ENCODE measurements at regions of chr4 and their contacts with region 1.

Region 1: GRCh38 chr4:88823058-88823919 is 125.7 kb upstream of the NAP1L5 start:
- DNase-seq: peak; percentile 57
- ATAC-seq: peak; percentile 97
- H3K4me3 ChIP-seq: peak overlapping the region; percentile 64
- H3K27ac ChIP-seq: no peak overlapping the region
- H3K4me1 ChIP-seq: peaks cover 5% of the 10 kb centered on the region; the same call in 1 of the 2 replicates
- H3K27me3 ChIP-seq: no peaks in the 10 kb centered on the region
- CTCF ChIP-seq: no peak
- EP300 ChIP-seq: no peak
- POLR2A ChIP-seq: no peak
- RAD21 ChIP-seq: no peak

Region 2: DNA sequence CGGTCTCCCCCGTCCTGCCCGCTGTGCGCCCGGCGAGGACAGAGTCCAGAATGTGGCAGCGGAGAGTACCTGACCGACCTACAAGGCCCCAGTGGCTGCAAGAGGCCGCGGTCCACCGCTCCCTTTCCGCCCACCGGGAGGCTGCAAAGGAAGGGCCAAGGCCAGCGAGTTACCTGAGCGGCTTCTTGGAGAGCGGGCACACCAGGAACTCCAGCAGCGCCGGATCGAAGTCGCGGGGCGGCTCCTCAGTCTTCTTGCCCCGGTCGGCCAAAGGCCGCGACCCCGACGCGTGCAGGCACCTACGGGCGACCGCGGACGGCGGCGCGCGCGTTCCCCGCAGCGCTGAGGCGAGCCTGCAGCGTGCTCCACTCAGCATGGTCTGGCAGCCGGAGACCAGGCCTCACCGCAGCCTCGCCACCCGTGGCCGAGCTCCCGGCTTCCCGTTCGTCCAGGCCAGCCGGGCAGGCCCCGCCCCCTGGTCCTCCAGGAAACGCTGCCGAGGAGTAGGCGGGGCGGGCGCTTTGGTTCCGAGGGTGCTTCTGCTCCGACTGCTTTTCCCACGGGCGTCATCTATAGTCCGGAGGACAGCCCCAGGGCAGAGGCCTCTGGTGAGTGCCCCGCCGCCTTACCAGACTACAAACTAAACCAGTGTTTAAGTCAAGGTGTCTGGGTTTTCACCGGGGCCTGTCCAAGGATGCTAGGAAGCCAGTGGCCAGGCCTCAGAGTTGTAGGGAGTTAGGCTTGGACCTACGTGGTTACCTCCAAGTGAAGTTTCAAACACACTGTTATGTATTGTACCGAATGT is 299.8 kb before region 1 on chr4 and contains the start of gene PYURF:
- CTCF ChIA-PET with region 1: interaction called, 17 read pairs
- POLR2A ChIA-PET with region 1: no interaction called
- RAD21 ChIA-PET with region 1: no interaction called
- SMC1A ChIA-PET with region 1: interaction called, 3 read pairs
- in situ Hi-C with region 1: no loop called
- intact Hi-C with region 1: no loop called
- DNase-seq: peak; percentile 44
- ATAC-seq: peak; percentile 88
- H3K4me3 ChIP-seq: peak within 1 kb of the TSS; percentile 71
- H3K27ac ChIP-seq: peak within 1 kb of the TSS; percentile 67
- H3K4me1 ChIP-seq: peaks cover 31% of the 10 kb centered on the region
- H3K27me3 ChIP-seq: no peaks in the 10 kb centered on the region
- CTCF ChIP-seq: no peak
- EP300 ChIP-seq: no peak
- POLR2A ChIP-seq: peak; percentile 93
- RAD21 ChIP-seq: no peak
- polyA plus RNA-seq, gene PYURF: 16.7 to 58.1 TPM

Region 3: DNA sequence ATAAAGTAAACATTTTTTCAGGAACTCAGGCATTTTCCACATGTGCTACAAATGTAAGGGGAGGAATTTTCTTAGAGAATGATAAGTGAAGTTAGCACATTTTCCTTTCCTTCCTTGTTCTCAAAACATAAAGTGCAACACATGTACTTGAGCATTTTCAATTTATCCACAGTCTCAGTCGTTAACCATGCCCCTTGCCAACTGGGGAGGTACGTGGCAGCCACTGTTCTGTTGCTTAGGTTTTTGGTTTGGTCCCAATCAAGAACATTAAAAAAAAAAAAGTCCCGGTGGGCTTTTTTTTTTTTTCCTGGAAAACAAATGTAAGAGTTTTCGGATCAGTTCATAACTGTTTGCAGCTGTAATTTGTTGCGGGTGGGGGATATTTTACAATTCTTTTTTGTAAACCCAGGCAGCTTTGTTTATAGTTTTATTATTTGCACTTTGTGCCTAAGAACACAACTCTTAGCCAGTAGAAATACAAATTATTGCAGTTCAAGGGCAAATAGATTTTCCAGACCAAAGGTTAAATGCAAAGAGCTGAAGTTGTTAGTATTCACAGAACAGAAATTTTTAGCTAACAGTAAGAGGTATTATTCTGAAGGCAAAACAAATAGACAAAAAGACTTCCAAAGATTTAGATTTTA is 13.6 kb before region 1 on chr4:
- CTCF ChIA-PET with region 1: interaction called, 23 read pairs
- POLR2A ChIA-PET with region 1: interaction called, 3 read pairs
- RAD21 ChIA-PET with region 1: interaction called, 10 read pairs
- SMC1A ChIA-PET with region 1: interaction called, 10 read pairs
- in situ Hi-C with region 1: no loop called
- intact Hi-C with region 1: no loop called
- DNase-seq: no peak
- ATAC-seq: no peak
- H3K4me3 ChIP-seq: no peak overlapping the region
- H3K27ac ChIP-seq: no peak overlapping the region
- H3K4me1 ChIP-seq: no peaks in the 10 kb centered on the region
- H3K27me3 ChIP-seq: no peaks in the 10 kb centered on the region; a peak in 1 of 4 replicates
- CTCF ChIP-seq: no peak
- EP300 ChIP-seq: no peak
- POLR2A ChIP-seq: no peak
- RAD21 ChIP-seq: no peak

Region 4: DNA sequence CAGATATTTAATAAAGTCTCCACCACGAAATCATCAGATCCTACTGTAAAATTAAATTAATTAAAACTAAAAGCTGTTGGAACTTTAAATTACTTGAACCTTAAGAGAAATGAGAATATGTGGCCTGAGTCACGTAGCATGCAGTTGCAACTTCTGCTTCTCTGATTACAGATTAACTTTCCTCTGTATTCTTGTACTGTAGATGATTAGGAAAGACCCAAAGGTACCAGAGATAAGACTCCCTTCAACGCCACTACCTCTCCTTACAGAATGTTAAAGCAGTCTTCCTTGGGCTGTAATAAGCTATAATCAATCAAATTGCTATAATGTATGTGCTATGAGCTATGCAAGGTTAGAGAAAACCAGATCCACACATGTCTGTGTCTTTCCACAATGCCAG is 185.8 kb after region 1 on chr4:
- CTCF ChIA-PET with region 1: interaction called, 6 read pairs
- POLR2A ChIA-PET with region 1: no interaction called
- RAD21 ChIA-PET with region 1: interaction called, 10 read pairs
- SMC1A ChIA-PET with region 1: interaction called, 26 read pairs
- in situ Hi-C with region 1: no loop called
- intact Hi-C with region 1: no loop called
- DNase-seq: no peak
- ATAC-seq: no peak
- H3K4me3 ChIP-seq: no peak overlapping the region
- H3K27ac ChIP-seq: no peak overlapping the region
- H3K4me1 ChIP-seq: no peaks in the 10 kb centered on the region
- H3K27me3 ChIP-seq: no peaks in the 10 kb centered on the region
- CTCF ChIP-seq: no peak
- EP300 ChIP-seq: no peak
- POLR2A ChIP-seq: no peak
- RAD21 ChIP-seq: no peak

Region 5: GRCh38 chr4:89056953-89057398 is 233.7 kb after region 1 on chr4 and contains the start of gene FAM13A:
- CTCF ChIA-PET with region 1: interaction called, 4 read pairs
- POLR2A ChIA-PET with region 1: interaction called, 3 read pairs
- RAD21 ChIA-PET with region 1: interaction called, 10 read pairs
- SMC1A ChIA-PET with region 1: interaction called, 4 read pairs
- in situ Hi-C with region 1: no loop called
- intact Hi-C with region 1: no loop called
- DNase-seq: peak; percentile 44
- ATAC-seq: peak; percentile 73
- H3K4me3 ChIP-seq: peak within 1 kb of the TSS; percentile 26; the same call in 1 of the 2 replicates
- H3K27ac ChIP-seq: peak within 1 kb of the TSS; percentile 13; the same call in 1 of the 2 replicates
- H3K4me1 ChIP-seq: no peaks in the 10 kb centered on the region
- H3K27me3 ChIP-seq: no peaks in the 10 kb centered on the region
- CTCF ChIP-seq: no peak
- EP300 ChIP-seq: no peak
- POLR2A ChIP-seq: no peak
- RAD21 ChIP-seq: no peak
- polyA plus RNA-seq, gene FAM13A: 0.09 to 0.27 TPM

Region 6: GRCh38 chr4:89158884-89159503 is 335.7 kb after region 1 on chr4:
- CTCF ChIA-PET with region 1: interaction called, 9 read pairs
- POLR2A ChIA-PET with region 1: interaction called, 4 read pairs
- RAD21 ChIA-PET with region 1: interaction called, 3 read pairs
- SMC1A ChIA-PET with region 1: interaction called, 6 read pairs
- in situ Hi-C with region 1: no loop called
- intact Hi-C with region 1: loop called (anchors 5 kb)
- DNase-seq: no peak
- ATAC-seq: peak; percentile 81
- H3K4me3 ChIP-seq: no peak overlapping the region
- H3K27ac ChIP-seq: no peak overlapping the region
- H3K4me1 ChIP-seq: no peaks in the 10 kb centered on the region
- H3K27me3 ChIP-seq: no peaks in the 10 kb centered on the region; a peak in 1 of 4 replicates
- CTCF ChIP-seq: peak; percentile 62 to 71 (median 70); a peak in 5 of 6 replicates
- EP300 ChIP-seq: no peak
- POLR2A ChIP-seq: no peak
- RAD21 ChIP-seq: peak; percentile 59

Region 7: GRCh38 chr4:89434364-89434988 is 611.2 kb after region 1 on chr4:
- CTCF ChIA-PET with region 1: interaction called, 4 read pairs
- POLR2A ChIA-PET with region 1: no interaction called
- RAD21 ChIA-PET with region 1: no interaction called
- SMC1A ChIA-PET with region 1: no interaction called
- in situ Hi-C with region 1: no loop called
- intact Hi-C with region 1: loop called (anchors 10 kb)
- DNase-seq: no peak
- ATAC-seq: peak; percentile 71
- H3K4me3 ChIP-seq: no peak overlapping the region
- H3K27ac ChIP-seq: no peak overlapping the region
- H3K4me1 ChIP-seq: no peaks in the 10 kb centered on the region
- H3K27me3 ChIP-seq: no peaks in the 10 kb centered on the region; a peak in 1 of 4 replicates
- CTCF ChIP-seq: peak; percentile 62 to 70 (median 67)
- EP300 ChIP-seq: no peak
- POLR2A ChIP-seq: no peak
- RAD21 ChIP-seq: peak; percentile 77

Region 8: DNA sequence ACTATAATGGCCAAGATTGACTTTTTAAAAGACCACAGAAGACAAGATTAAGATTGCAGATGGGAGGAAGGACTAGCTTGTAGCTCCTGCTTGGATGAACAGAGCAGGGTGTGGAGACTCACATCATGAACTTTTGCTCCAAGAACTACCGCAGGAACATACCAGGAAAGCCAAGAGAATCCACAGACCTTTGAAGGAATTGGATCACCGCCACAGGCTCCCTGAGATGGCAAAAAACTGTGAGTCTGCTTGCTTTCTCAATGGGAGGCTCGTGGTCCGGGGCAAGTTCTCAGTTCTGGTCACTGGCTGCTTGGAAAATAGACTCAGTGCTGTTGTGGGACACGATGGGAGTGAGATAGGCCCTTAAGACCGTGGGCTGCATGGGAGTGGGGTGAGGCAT is 1580.5 kb after region 1 on chr4:
- CTCF ChIA-PET with region 1: no interaction called
- POLR2A ChIA-PET with region 1: no interaction called
- RAD21 ChIA-PET with region 1: no interaction called
- SMC1A ChIA-PET with region 1: no interaction called
- in situ Hi-C with region 1: no loop called
- intact Hi-C with region 1: no loop called
- DNase-seq: no peak
- ATAC-seq: no peak
- H3K4me3 ChIP-seq: no peak overlapping the region
- H3K27ac ChIP-seq: no peak overlapping the region
- H3K4me1 ChIP-seq: no peaks in the 10 kb centered on the region
- H3K27me3 ChIP-seq: no peaks in the 10 kb centered on the region
- CTCF ChIP-seq: no peak
- EP300 ChIP-seq: no peak
- POLR2A ChIP-seq: no peak
- RAD21 ChIP-seq: no peak